MCF 10A (cell line): ENCODE measurements at regions of chr17 and their contacts with region 1.

Region 1: DNA sequence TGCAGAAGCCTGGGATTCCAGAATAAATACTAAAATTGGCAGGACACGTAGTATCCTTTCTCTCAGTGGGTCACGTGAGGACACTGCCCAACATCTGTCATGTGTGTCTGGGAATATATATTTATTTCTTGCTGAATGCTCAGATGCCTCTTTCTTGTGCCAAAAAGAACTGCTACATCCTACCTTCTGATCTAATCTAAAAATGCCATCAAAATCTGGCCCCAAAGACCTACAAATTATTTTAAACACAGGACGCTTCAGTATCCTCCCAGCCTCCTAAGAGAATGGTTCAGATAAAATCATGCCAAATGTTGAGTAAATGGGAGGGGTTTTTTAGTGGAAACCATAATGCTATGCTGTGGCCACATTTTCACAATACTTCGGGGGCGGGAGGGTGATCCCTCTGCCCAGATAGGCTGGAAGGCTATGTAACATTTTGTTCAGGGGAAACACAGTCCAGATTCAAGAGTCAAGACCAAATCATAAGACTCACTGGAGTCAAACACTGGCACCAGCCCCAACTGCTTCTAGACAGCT is 22.9 kb upstream of the CORO6 start:
- DNase-seq: peak; percentile 63
- H3K4me3 Mint-ChIP-seq: peak overlapping the region; percentile 45
- H3K27ac Mint-ChIP-seq: peak overlapping the region; percentile 87
- H3K4me1 Mint-ChIP-seq: peaks cover 21% of the 10 kb centered on the region
- H3K27me3 Mint-ChIP-seq: no peaks in the 10 kb centered on the region
- CTCF ChIP-seq: no peak

Region 2: GRCh38 chr17:29777663-29778062 is 132.1 kb after region 1 on chr17:
- CTCF ChIA-PET with region 1: interaction called, 85 read pairs
- POLR2A ChIA-PET with region 1: interaction called, 44 read pairs
- intact Hi-C with region 1: no loop called
- DNase-seq: no peak
- H3K4me3 Mint-ChIP-seq: no peak overlapping the region
- H3K27ac Mint-ChIP-seq: no peak overlapping the region
- H3K4me1 Mint-ChIP-seq: no peaks in the 10 kb centered on the region
- H3K27me3 Mint-ChIP-seq: no peaks in the 10 kb centered on the region
- CTCF ChIP-seq: no peak

Region 3: GRCh38 chr17:29825604-29826003 is 180.0 kb after region 1 on chr17:
- CTCF ChIA-PET with region 1: no interaction called
- POLR2A ChIA-PET with region 1: no interaction called
- intact Hi-C with region 1: no loop called
- DNase-seq: no peak
- H3K4me3 Mint-ChIP-seq: no peak overlapping the region
- H3K27ac Mint-ChIP-seq: no peak overlapping the region
- H3K4me1 Mint-ChIP-seq: no peaks in the 10 kb centered on the region
- H3K27me3 Mint-ChIP-seq: no peaks in the 10 kb centered on the region
- CTCF ChIP-seq: no peak